ENCODE measurements at regions of chrX and their contacts with region 1.

Region 1: GRCh38 chrX:153476647-153477362 is 6.4 kb upstream of the HAUS7 start:
- DNase-seq: no peak

Region 2: GRCh38 chrX:153494541-153495361 is 17.9 kb after region 1 on chrX and contains the start of gene BGN:
- intact Hi-C with region 1: loop called (anchors 2 kb)
- DNase-seq: no peak
- total RNA-seq, gene BGN: 175 TPM

Region 3: GRCh38 chrX:155056877-155057792 is 1580.3 kb after region 1 on chrX:
- intact Hi-C with region 1: no loop called
- DNase-seq: peak; percentile 82